PC-3 (cell line): ENCODE measurements at regions of chr3 and their contacts with region 1.

Region 1: DNA sequence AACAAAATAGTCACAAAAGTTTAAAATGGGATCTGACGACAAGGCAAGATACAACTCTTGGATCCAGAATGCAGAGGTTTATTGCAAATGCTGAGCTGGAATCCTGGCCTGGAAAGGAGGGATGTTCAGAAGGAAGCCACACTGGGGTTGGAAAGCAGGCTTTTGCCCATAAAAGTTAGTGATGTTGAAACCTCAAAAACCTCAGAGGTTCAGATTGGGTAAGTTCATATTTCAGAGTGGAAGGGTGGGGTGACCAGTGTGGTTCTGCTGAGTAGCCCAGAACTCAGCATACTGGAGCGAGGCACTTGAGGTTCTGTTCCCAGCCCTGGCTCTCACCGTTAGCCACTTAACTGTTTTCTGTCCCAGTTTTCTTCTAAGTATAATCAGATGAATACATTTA is 114.0 kb upstream of the OSTN start:
- DNase-seq: peak; percentile 39
- ATAC-seq: peak; percentile 53; the same call in 1 of the 2 replicates
- H3K4me3 ChIP-seq: no peak overlapping the region
- H3K27ac ChIP-seq: no peak overlapping the region
- H3K4me1 ChIP-seq: peaks cover 10% of the 10 kb centered on the region
- H3K27me3 ChIP-seq: no peaks in the 10 kb centered on the region
- CTCF ChIP-seq: no peak

Region 2: GRCh38 chr3:191105418-191105817 is 20.3 kb after region 1 on chr3:
- CTCF ChIA-PET with region 1: no interaction called
- POLR2A ChIA-PET with region 1: no interaction called
- intact Hi-C with region 1: no loop called
- DNase-seq: no peak
- ATAC-seq: no peak
- H3K4me3 ChIP-seq: no peak overlapping the region
- H3K27ac ChIP-seq: no peak overlapping the region
- H3K4me1 ChIP-seq: no peaks in the 10 kb centered on the region
- H3K27me3 ChIP-seq: no peaks in the 10 kb centered on the region
- CTCF ChIP-seq: no peak

Region 3: DNA sequence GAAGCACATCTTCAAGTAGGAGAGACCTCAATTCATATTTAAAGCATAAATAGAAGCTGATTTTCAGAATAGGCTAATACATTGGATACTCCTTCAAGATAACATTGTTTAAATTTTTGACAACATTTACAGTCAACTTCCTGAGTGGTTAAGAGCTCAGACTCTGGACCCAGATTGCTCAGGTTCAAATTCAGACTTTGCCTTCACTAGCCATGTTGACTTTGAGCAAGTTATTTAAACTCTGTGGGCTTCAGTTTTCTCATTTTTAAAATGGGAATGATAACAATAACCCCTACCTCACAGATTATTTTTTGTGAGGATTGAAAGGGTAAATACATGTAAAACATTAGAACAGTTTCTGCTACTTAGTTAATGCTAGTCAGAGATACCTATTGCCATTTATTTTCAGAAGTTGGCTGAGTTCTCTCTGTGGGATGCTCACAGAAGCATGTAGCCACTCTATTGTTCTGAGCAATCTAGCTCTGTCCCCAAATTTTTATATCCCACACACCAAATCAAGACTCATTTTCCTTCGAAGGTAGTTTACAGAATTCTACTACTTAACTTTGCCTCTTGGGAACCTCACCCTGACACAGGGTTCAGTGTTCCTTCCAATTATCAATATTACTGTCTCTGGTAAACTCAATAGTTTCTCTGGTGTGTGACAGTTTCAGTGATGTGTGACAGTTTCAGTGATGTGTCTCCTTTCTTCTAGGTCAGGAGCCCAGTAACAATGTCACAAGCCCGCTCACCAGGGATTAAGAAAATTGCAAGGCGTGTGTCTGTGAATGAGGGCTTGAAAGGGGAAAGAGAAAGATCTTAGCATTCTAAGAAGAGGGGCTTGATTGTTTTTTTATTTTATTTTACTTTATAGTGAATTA is 34.6 kb after region 1 on chr3:
- CTCF ChIA-PET with region 1: no interaction called
- POLR2A ChIA-PET with region 1: no interaction called
- intact Hi-C with region 1: loop called (anchors 5 kb)
- DNase-seq: no peak
- ATAC-seq: no peak
- H3K4me3 ChIP-seq: no peak overlapping the region
- H3K27ac ChIP-seq: no peak overlapping the region
- H3K4me1 ChIP-seq: peaks cover 10% of the 10 kb centered on the region
- H3K27me3 ChIP-seq: no peaks in the 10 kb centered on the region
- CTCF ChIP-seq: no peak